ENCODE measurements at regions of chrX and their contacts with region 1.

Region 1: GRCh38 chrX:118226090-118226428 is 109.4 kb upstream of the KLHL13 start:
- DNase-seq: no peak
- ATAC-seq: peak; percentile 87
- H3K4me3 ChIP-seq: no peak overlapping the region
- H3K27ac ChIP-seq: no peak overlapping the region
- H3K4me1 ChIP-seq: no peaks in the 10 kb centered on the region
- H3K27me3 ChIP-seq: no peaks in the 10 kb centered on the region
- CTCF ChIP-seq: peak; percentile 35 to 51 (median 39); a peak in 5 of 6 replicates
- EP300 ChIP-seq: no peak
- POLR2A ChIP-seq: no peak
- RAD21 ChIP-seq: peak; percentile 81

Region 2: DNA sequence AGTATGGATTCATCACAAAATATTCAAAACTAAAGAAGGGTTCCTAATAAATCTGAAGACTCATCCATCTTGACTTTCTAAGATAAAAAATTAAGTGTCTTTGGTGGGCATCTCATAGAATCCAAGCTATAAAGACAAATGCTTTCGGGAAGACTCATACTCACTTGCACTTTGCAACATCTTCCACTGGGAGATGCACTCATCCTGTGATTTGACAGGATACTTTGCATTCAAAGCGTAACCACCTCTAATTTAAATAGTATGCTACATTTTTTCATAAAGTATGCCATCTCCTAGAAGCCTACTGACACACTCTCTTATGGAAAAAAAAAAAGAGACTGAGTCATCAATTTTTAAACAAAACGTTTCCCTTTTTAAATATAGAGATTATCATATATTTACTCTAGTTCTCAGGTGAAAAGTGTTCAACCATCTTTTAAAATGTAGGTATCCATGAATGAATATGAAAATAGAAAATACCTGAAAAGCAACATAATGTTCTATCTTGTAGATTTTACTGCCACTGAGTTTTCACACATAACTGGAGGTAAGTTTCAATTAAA is 229.1 kb before region 1 on chrX:
- CTCF ChIA-PET with region 1: interaction called, 5 read pairs
- POLR2A ChIA-PET with region 1: no interaction called
- RAD21 ChIA-PET with region 1: interaction called, 9 read pairs
- SMC1A ChIA-PET with region 1: interaction called, 5 read pairs
- in situ Hi-C with region 1: no loop called
- intact Hi-C with region 1: loop called (anchors 2 kb)
- DNase-seq: no peak
- ATAC-seq: peak; percentile 32; the same call in 1 of the 3 replicates
- H3K4me3 ChIP-seq: no peak overlapping the region
- H3K27ac ChIP-seq: no peak overlapping the region
- H3K4me1 ChIP-seq: no peaks in the 10 kb centered on the region
- H3K27me3 ChIP-seq: no peaks in the 10 kb centered on the region
- CTCF ChIP-seq: peak; percentile 34 to 47 (median 45); a peak in 4 of 6 replicates
- EP300 ChIP-seq: no peak
- POLR2A ChIP-seq: no peak
- RAD21 ChIP-seq: peak; percentile 79

Region 3: GRCh38 chrX:118212817-118213183 is 13.3 kb before region 1 on chrX:
- CTCF ChIA-PET with region 1: interaction called, 28 read pairs
- POLR2A ChIA-PET with region 1: no interaction called
- RAD21 ChIA-PET with region 1: interaction called, 12 read pairs
- SMC1A ChIA-PET with region 1: interaction called, 4 read pairs
- in situ Hi-C with region 1: no loop called
- intact Hi-C with region 1: no loop called
- DNase-seq: peak; percentile 52
- ATAC-seq: peak; percentile 85
- H3K4me3 ChIP-seq: 0 out of 2 replicates have a peak overlapping the region, but pooled peaks have one; percentile 20
- H3K27ac ChIP-seq: peak overlapping the region; percentile 52; the same call in 1 of the 2 replicates
- H3K4me1 ChIP-seq: peaks cover 9% of the 10 kb centered on the region
- H3K27me3 ChIP-seq: no peaks in the 10 kb centered on the region; a peak in 1 of 4 replicates
- CTCF ChIP-seq: no peak
- EP300 ChIP-seq: no peak
- POLR2A ChIP-seq: no peak
- RAD21 ChIP-seq: no peak